ENCODE measurements at regions of chr12 and their contacts with region 1.

Region 1: GRCh38 chr12:124745891-124746570 is 117.6 kb downstream of the SCARB1 start:
- DNase-seq: peak; percentile 91
- H3K4me3 Mint-ChIP-seq: peak overlapping the region; percentile 53
- H3K27ac Mint-ChIP-seq: no peak overlapping the region
- H3K4me1 Mint-ChIP-seq: peaks cover 30% of the 10 kb centered on the region
- H3K27me3 Mint-ChIP-seq: no peaks in the 10 kb centered on the region
- CTCF ChIP-seq: no peak

Region 2: GRCh38 chr12:124512667-124513296 is 233.2 kb before region 1 on chr12:
- CTCF ChIA-PET with region 1: no interaction called
- POLR2A ChIA-PET with region 1: interaction called, 15 read pairs
- intact Hi-C with region 1: loop called (anchors 5 kb)
- DNase-seq: peak; percentile 99
- H3K4me3 Mint-ChIP-seq: peak overlapping the region; percentile 57
- H3K27ac Mint-ChIP-seq: no peak overlapping the region
- H3K4me1 Mint-ChIP-seq: peaks cover 41% of the 10 kb centered on the region
- H3K27me3 Mint-ChIP-seq: no peaks in the 10 kb centered on the region
- CTCF ChIP-seq: no peak

Region 3: DNA sequence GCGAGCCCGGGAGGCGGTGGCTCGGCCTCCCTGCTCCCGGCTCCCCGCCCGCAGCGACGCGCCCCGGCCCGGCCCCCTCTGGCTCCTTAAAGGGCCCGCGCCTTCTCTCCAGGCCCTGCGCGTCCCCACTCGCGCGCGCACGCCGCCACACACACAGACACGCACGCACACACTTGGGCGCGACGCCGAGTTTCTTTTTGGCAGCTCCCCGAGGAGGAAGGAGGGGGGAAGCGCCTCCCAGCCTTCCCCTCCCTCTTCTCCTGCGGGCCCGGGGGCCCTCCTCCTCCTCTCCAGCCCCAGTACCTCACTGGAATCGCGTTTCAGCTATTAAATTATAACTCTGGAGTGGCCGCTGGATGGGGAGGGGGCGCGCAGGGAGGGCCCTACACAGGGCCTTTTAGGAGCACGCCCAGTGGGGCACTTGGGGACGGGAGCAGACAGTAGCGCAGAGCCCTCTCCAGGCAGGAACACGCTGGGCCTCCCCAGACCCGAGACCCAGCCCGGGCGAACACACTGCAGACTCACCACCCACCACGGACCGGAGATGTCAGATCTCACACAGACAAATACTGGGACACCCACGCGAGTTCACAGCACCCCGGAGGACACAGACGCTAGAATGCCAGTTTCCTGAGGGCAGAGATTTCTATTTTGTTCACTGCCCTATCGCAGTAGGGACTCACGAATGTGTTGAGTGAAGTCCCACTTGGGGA is 178.2 kb before region 1 on chr12:
- CTCF ChIA-PET with region 1: interaction called, 3 read pairs
- POLR2A ChIA-PET with region 1: interaction called, 3 read pairs
- intact Hi-C with region 1: loop called (anchors 5 kb)
- DNase-seq: peak; percentile 79
- H3K4me3 Mint-ChIP-seq: peak overlapping the region; percentile 72
- H3K27ac Mint-ChIP-seq: no peak overlapping the region
- H3K4me1 Mint-ChIP-seq: peaks cover 6% of the 10 kb centered on the region
- H3K27me3 Mint-ChIP-seq: no peaks in the 10 kb centered on the region
- CTCF ChIP-seq: no peak

Region 4: DNA sequence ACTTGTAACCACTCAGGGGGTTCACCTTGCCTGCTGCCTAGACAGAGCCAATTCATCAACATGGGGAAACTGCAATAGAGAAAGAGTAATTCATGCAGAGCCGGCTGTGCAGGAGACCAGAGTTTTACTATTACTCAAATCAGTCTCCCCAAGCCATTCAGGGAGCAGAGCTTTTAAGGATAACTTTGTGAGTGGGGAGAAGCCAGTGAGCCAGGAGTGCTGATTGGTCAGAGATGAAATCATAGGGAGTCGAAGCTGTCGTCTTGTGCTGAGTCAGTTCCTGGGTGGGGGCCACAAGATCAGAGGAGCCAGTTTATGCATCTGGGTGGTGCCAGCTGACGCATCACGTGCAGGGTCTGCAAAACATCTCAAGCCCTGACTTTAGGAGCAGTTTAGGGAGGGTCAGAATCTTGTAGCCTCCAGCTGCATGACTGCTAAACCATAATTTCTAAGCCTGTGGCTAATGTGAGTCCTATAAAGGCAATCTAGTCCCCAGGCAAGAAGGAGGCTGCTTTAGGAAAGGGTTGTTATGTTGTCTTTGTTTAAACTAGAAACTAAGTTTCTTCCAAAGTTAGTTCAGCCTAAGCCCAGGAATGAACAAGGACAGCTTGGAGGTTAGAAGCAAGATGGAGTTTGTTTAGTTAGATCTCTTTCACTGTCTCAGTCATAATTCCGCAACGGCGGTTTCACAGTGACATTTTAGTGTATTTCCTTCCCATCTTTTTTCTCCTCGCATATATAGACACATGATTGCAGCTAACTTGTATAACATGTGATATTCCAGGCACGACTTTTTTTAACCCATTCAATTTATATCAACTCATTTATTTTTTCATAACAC is 109.7 kb before region 1 on chr12:
- CTCF ChIA-PET with region 1: no interaction called
- POLR2A ChIA-PET with region 1: interaction called, 8 read pairs
- intact Hi-C with region 1: loop called (anchors 2 kb)
- DNase-seq: peak; percentile 67
- H3K4me3 Mint-ChIP-seq: no peak overlapping the region
- H3K27ac Mint-ChIP-seq: peak overlapping the region; percentile 59
- H3K4me1 Mint-ChIP-seq: peaks cover 56% of the 10 kb centered on the region
- H3K27me3 Mint-ChIP-seq: no peaks in the 10 kb centered on the region
- CTCF ChIP-seq: no peak

Region 5: GRCh38 chr12:124923906-124924734 is 178.1 kb after region 1 on chr12:
- CTCF ChIA-PET with region 1: no interaction called
- POLR2A ChIA-PET with region 1: no interaction called
- intact Hi-C with region 1: no loop called
- DNase-seq: peak; percentile 92
- H3K4me3 Mint-ChIP-seq: peak overlapping the region; percentile 58
- H3K27ac Mint-ChIP-seq: peak overlapping the region; percentile 75
- H3K4me1 Mint-ChIP-seq: peaks cover 64% of the 10 kb centered on the region
- H3K27me3 Mint-ChIP-seq: no peaks in the 10 kb centered on the region
- CTCF ChIP-seq: no peak